Aorta (tissue), 5 donors: ENCODE measurements at regions of chr19 and their contacts with region 1.

Region 1: GRCh38 chr19:15154002-15154612 is 46.7 kb downstream of the NOTCH3 start:
- DNase-seq: peak in 1 of 2 donors; percentile 51
- ATAC-seq: no peak
- H3K4me3 ChIP-seq: no peak overlapping the region
- H3K27ac ChIP-seq: no peak overlapping the region
- H3K4me1 ChIP-seq: no peaks in the 10 kb centered on the region
- H3K27me3 ChIP-seq: no peaks in the 10 kb centered on the region

Region 2: GRCh38 chr19:15091901-15092753 is 62.0 kb before region 1 on chr19:
- intact Hi-C with region 1: loop called (anchors 2 to 5 kb)
- DNase-seq: no peak
- ATAC-seq: peak; percentile 76
- H3K4me3 ChIP-seq: no peak overlapping the region
- H3K27ac ChIP-seq: no peak overlapping the region
- H3K4me1 ChIP-seq: no peaks in the 10 kb centered on the region
- H3K27me3 ChIP-seq: no peaks in the 10 kb centered on the region